CD4-positive, alpha-beta memory T cell (primary cell): ENCODE measurements at regions of chr5 and their contacts with region 1.

Region 1: DNA sequence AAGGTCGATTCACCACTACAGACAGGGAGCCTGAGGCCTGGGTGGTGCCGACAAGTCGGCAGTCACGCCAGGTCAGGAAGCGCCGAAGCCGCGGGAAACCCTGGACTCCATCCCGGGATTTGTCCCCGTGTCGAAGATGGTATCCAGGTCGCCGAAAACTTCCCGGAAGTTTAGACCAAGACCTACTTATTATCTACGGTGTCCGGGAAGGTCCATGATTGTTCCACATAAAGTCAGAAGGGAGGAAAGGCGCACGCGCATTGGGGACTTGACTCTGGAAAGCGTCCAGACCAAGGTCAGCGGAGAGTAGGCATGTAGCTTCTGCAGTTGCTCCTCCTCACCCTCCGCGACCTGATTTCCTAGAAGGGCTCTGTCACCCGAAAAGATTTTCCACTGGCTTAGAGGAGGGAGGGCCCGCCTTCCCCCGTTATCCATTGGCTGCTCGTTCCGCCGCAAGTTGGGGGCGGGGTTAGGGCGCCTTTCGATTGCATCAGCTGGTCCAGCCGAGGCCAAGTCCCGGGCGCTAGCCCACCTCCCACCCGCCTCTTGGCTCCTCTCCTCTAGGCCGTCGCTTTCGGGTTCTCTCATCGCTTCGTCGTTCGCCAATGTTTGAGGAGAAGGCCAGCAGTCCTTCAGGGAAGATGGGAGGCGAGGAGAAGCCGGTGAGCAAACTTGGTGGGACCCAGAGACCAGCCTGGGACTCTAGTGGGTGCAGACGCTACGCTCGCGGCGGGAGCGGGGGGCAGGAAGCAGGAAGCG is at the start of gene TARS1:
- DNase-seq: peak; percentile 91 to 96 (median 92)
- H3K4me3 ChIP-seq: peak within 1 kb of the TSS; percentile 83 to 98
- H3K4me3 Mint-ChIP-seq: no peak within 1 kb of the TSS
- H3K27ac ChIP-seq: peak within 1 kb of the TSS; percentile 84
- H3K27ac Mint-ChIP-seq: no peak within 1 kb of the TSS
- H3K4me1 ChIP-seq: peaks cover 47% of the 10 kb centered on the region
- H3K4me1 Mint-ChIP-seq: peaks cover 20 to 29% (median 27%) of the 10 kb centered on the region in 4 donors
- H3K27me3 ChIP-seq: no peaks in the 10 kb centered on the region
- H3K27me3 Mint-ChIP-seq: no peaks in the 10 kb centered on the region
- total RNA-seq, gene TARS1: 111 to 126 TPM

Region 2: GRCh38 chr5:31531888-31532710 is 1908.6 kb before region 1 on chr5 and contains the starts of genes C5orf22 and DROSHA:
- CTCF ChIA-PET with region 1: no interaction called
- POLR2A ChIA-PET with region 1: no interaction called
- intact Hi-C with region 1: loop called (anchors 5 kb)
- DNase-seq: peak; percentile 87 to 93 (median 88)
- H3K4me3 ChIP-seq: peak within 1 kb of the TSS; percentile 90 to 94
- H3K4me3 Mint-ChIP-seq: peak within 1 kb of the TSS; percentile 98 to 100 (median 98)
- H3K27ac ChIP-seq: peak within 1 kb of the TSS; percentile 67
- H3K27ac Mint-ChIP-seq: peak within 1 kb of the TSS; percentile 87 to 99 (median 96)
- H3K4me1 ChIP-seq: peaks cover 48% of the 10 kb centered on the region
- H3K4me1 Mint-ChIP-seq: peaks cover 35 to 76% (median 54%) of the 10 kb centered on the region in 4 donors
- H3K27me3 ChIP-seq: no peaks in the 10 kb centered on the region
- H3K27me3 Mint-ChIP-seq: no peaks in the 10 kb centered on the region
- total RNA-seq, gene C5orf22: 26.9 to 30.9 TPM
- total RNA-seq, gene DROSHA: 76.1 to 92.6 TPM

Region 3: DNA sequence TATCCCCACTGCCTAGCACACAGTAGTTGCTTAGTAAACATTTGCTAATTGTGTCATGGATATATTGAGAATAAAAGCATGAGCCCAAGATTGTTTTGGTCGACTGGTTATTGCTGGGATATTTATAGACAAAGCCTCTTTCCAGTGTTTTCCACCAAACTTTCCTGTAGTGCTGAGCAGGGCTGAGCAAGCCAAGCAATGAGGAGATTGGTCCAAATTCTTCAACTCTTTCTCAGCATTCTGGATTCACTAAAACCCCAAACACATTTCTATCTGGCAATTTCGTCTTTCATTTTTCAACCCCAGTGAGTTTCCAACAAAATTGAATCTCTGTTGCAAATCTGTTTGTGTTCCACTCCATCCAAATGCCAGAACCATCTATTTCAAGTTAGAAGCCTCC is 31.8 kb before region 1 on chr5:
- CTCF ChIA-PET with region 1: no interaction called
- POLR2A ChIA-PET with region 1: no interaction called
- intact Hi-C with region 1: no loop called
- DNase-seq: no peak
- H3K4me3 ChIP-seq: no peak overlapping the region
- H3K4me3 Mint-ChIP-seq: no peak overlapping the region
- H3K27ac ChIP-seq: no peak overlapping the region
- H3K27ac Mint-ChIP-seq: no peak overlapping the region
- H3K4me1 ChIP-seq: no peaks in the 10 kb centered on the region
- H3K4me1 Mint-ChIP-seq: no peaks in the 10 kb centered on the region
- H3K27me3 ChIP-seq: no peaks in the 10 kb centered on the region
- H3K27me3 Mint-ChIP-seq: peaks cover 4 to 6% of the 10 kb centered on the region in 2 donors

Region 4: GRCh38 chr5:33470544-33470943 is 29.9 kb after region 1 on chr5:
- CTCF ChIA-PET with region 1: interaction called, 3 read pairs
- POLR2A ChIA-PET with region 1: no interaction called
- intact Hi-C with region 1: loop called (anchors 2 kb)
- DNase-seq: no peak
- H3K4me3 ChIP-seq: no peak overlapping the region
- H3K4me3 Mint-ChIP-seq: no peak overlapping the region
- H3K27ac ChIP-seq: no peak overlapping the region
- H3K27ac Mint-ChIP-seq: peak overlapping the region in 1 of 7 donors; percentile 26
- H3K4me1 ChIP-seq: no peaks in the 10 kb centered on the region
- H3K4me1 Mint-ChIP-seq: no peaks in the 10 kb centered on the region
- H3K27me3 ChIP-seq: no peaks in the 10 kb centered on the region
- H3K27me3 Mint-ChIP-seq: no peaks in the 10 kb centered on the region

Region 5: DNA sequence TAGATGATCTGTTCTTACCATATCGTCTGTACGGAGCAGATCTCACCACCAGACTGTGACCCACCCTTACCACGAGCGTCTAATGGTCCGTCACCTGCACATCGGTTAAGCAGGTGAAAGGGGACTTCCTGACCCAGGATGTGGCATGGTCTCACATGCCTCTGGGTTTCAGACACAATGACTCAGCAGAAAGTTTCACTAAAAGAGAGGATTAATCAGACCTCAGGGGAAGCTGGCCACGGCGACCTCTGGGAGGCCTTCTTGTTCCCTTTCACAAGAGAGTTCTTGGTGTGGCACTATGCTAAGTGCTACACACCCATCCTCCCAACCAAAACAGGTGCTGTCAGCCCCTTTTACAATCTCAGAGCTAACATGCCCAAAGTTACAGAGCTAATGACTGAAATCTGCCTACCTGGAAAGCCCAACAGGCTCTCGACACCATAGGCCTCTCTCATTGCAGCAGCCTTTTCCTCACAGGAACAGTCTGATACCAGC is 409.5 kb after region 1 on chr5:
- CTCF ChIA-PET with region 1: no interaction called
- POLR2A ChIA-PET with region 1: no interaction called
- intact Hi-C with region 1: loop called (anchors 5 kb)
- DNase-seq: peak; percentile 15 to 71 (median 36)
- H3K4me3 ChIP-seq: no peak overlapping the region
- H3K4me3 Mint-ChIP-seq: peak overlapping the region in 7 of 8 donors; percentile 11 to 67 (median 37)
- H3K27ac ChIP-seq: no peak overlapping the region
- H3K27ac Mint-ChIP-seq: peak overlapping the region; percentile 10 to 90 (median 77)
- H3K4me1 ChIP-seq: peaks cover 10% of the 10 kb centered on the region
- H3K4me1 Mint-ChIP-seq: peaks cover 7 to 10% (median 9%) of the 10 kb centered on the region in 4 donors
- H3K27me3 ChIP-seq: no peaks in the 10 kb centered on the region
- H3K27me3 Mint-ChIP-seq: no peaks in the 10 kb centered on the region

Region 6: DNA sequence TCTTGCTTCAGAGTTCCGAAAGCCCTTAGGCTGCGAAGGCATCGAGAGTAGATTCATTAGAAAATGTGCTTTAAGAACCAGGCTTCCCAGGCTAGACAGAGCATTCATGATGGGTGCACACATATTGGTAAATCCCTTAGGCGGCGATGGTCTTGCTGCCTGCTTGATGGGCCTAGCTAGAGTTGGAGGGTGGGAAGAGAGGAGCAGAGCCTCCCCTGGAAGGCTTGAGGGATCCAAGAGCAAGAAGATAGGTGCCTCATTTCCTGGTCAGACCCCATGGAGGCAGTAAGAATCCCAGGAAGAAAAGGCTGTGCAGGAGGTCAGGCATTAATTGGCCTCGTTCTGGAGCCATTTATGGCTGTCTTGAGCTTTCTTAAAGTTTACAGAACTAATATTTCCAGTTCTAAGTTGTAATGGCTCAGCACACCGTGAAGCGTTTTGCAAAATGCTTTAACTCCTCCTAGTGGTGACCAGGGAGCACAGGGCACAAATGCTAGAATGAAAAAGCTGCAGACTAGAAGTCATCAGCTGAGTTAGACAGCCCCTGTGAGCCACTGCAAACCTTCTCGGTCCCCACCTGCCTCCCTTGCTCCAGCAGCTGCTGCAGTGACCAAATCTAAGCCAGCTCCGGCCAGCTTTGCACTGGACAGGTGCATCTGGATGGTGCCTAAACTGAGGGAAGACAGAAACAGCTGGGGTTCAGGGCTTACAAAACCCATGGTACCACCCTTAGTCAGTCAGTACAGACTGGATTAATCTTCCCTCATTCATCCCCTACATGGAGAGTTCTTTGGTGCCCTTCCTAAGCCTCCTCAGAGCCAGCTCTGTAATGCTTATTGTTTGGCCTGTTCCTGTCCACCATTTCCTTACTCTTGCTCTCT is 529.2 kb after region 1 on chr5:
- CTCF ChIA-PET with region 1: interaction called, 28 read pairs
- POLR2A ChIA-PET with region 1: no interaction called
- intact Hi-C with region 1: loop called (anchors 1 kb)
- DNase-seq: peak in 4 of 5 donors; percentile 8 to 20 (median 12)
- H3K4me3 ChIP-seq: no peak overlapping the region
- H3K4me3 Mint-ChIP-seq: no peak overlapping the region
- H3K27ac ChIP-seq: no peak overlapping the region
- H3K27ac Mint-ChIP-seq: peak overlapping the region in 1 of 7 donors; percentile 35
- H3K4me1 ChIP-seq: no peaks in the 10 kb centered on the region
- H3K4me1 Mint-ChIP-seq: peaks cover 2 to 12% (median 7%) of the 10 kb centered on the region in 4 donors
- H3K27me3 ChIP-seq: no peaks in the 10 kb centered on the region
- H3K27me3 Mint-ChIP-seq: no peaks in the 10 kb centered on the region

Region 7: DNA sequence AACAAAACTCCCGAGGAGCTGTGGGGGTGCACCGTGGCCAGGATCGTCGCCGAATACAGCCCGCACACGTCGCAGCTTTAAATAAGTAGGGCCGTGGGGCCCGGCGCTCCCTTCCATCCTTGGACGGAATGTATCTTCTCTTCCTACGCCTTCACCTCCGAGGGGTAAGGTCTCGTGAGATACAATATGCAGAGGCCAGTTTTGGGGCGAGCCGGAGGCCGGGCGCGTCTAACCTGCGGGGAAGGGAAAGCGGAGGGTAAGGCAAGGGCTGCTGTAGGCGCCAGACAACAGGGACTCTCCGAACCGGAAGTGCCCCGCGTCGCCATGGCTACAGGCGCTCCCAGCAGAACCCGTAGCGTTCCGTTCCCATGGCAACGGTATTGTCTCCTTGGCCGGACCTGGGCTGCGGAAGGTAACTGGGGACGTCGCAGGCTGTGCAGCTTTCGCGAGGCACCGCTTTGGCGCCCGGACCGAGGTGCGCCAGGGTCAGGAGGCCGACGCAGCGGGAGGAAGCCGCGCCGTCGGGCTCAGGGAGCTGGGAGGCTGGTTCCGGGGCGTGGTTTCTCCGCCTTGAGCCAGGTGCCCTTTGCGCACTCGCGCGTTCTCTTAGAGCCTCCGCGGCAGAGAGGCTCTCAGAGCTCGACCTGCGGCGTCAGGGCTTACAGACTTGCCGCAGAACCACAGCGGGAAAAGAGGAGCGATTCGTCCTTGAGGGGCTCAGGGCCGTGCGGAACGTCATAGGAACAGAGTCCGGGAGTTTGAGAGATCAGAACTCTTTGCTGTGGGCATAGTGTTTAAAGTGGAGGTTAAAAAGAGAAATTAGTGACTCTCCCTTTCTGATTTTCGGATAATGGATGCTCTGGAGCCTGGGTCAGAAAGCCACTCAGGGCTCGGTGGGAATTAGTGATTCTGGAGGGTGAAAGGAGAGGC is 1398.4 kb after region 1 on chr5 and contains the start of gene TTC23L:
- CTCF ChIA-PET with region 1: no interaction called
- POLR2A ChIA-PET with region 1: no interaction called
- intact Hi-C with region 1: loop called (anchors 1 kb)
- DNase-seq: peak; percentile 90 to 97 (median 91)
- H3K4me3 ChIP-seq: peak within 1 kb of the TSS; percentile 88 to 89
- H3K4me3 Mint-ChIP-seq: peak within 1 kb of the TSS; percentile 93 to 98 (median 95)
- H3K27ac ChIP-seq: peak within 1 kb of the TSS; percentile 70
- H3K27ac Mint-ChIP-seq: peak within 1 kb of the TSS; percentile 96 to 99 (median 98)
- H3K4me1 ChIP-seq: peaks cover 13% of the 10 kb centered on the region
- H3K4me1 Mint-ChIP-seq: peaks cover 4 to 16% (median 10%) of the 10 kb centered on the region in 4 donors
- H3K27me3 ChIP-seq: no peaks in the 10 kb centered on the region
- H3K27me3 Mint-ChIP-seq: peaks cover 0 to 2% of the 10 kb centered on the region in 2 donors
- total RNA-seq, gene TTC23L: 0.47 TPM in 1 of 2 experiments, not detected in the other